ENCODE measurements at regions of chr10 and their contacts with region 1.

Region 1: DNA sequence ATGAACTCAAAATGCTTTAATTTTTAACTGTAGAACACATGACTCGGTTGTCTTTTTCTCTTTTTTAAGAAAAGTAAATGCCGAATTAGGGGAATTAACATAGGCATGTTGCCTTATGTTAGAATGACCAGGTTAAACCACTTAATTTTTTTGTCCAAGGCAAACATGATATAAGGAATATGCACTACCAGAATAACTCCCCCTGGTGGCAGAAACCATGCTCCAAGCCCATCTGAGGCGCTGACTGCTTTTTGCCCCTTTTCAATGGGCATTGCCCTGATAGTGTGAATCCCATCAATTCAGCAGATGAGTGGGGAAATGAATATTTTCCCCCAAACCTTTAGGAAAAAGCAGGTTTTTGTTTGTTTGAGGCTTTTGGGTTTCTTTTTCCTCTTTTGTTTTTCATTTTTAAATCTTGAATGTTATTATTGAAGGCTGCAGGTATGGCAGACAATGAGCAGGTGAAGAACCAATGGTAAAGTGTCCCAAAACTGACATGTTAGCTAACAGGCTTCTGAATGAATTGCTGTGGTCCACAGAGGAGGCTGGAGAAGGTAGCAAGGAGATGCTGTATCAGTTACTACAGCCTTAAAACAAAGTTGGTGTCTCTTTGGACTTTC is 284.3 kb downstream of the SORCS3 start:
- DNase-seq: peak; percentile 55
- H3K4me3 Mint-ChIP-seq: no peak overlapping the region
- H3K27ac Mint-ChIP-seq: no peak overlapping the region
- H3K4me1 Mint-ChIP-seq: no peaks in the 10 kb centered on the region
- H3K27me3 Mint-ChIP-seq: peaks cover 22% of the 10 kb centered on the region
- CTCF ChIP-seq: no peak

Region 2: GRCh38 chr10:104406715-104407650 is 518.4 kb before region 1 on chr10:
- CTCF ChIA-PET with region 1: no interaction called
- intact Hi-C with region 1: loop called (anchors 10 kb)
- DNase-seq: no peak
- H3K4me3 Mint-ChIP-seq: no peak overlapping the region
- H3K27ac Mint-ChIP-seq: no peak overlapping the region
- H3K4me1 Mint-ChIP-seq: no peaks in the 10 kb centered on the region
- H3K27me3 Mint-ChIP-seq: peaks cover 50% of the 10 kb centered on the region
- CTCF ChIP-seq: no peak

Region 3: GRCh38 chr10:104650072-104650471 is 275.3 kb before region 1 on chr10:
- CTCF ChIA-PET with region 1: no interaction called
- intact Hi-C with region 1: loop called (anchors 1 kb)
- DNase-seq: no peak
- H3K4me3 Mint-ChIP-seq: no peak overlapping the region
- H3K27ac Mint-ChIP-seq: no peak overlapping the region
- H3K4me1 Mint-ChIP-seq: no peaks in the 10 kb centered on the region
- H3K27me3 Mint-ChIP-seq: peaks cover 51% of the 10 kb centered on the region
- CTCF ChIP-seq: no peak

Region 4: DNA sequence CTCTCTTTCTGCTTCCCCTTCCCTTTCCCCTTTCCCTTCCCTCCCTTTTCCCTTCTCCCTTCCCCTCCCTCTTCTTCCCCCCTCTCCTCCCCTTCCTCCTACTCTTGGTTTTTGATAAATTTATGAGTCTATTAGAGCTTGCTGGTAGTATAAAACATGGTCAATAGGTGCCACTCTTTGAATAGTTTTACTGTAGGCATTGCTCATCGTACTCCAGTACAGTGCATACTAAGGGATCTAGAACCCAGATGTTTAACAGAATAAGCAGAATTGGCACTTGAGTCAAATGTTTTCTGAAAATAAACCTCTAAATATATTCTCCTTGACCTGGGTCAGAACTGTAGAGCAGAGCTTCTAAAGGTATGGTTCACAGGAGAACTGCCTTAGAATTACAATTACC is 157.6 kb before region 1 on chr10:
- CTCF ChIA-PET with region 1: interaction called, 5 read pairs
- intact Hi-C with region 1: loop called (anchors 1 kb)
- DNase-seq: no peak
- H3K4me3 Mint-ChIP-seq: no peak overlapping the region
- H3K27ac Mint-ChIP-seq: no peak overlapping the region
- H3K4me1 Mint-ChIP-seq: no peaks in the 10 kb centered on the region
- H3K27me3 Mint-ChIP-seq: peaks cover 55% of the 10 kb centered on the region
- CTCF ChIP-seq: no peak

Region 5: DNA sequence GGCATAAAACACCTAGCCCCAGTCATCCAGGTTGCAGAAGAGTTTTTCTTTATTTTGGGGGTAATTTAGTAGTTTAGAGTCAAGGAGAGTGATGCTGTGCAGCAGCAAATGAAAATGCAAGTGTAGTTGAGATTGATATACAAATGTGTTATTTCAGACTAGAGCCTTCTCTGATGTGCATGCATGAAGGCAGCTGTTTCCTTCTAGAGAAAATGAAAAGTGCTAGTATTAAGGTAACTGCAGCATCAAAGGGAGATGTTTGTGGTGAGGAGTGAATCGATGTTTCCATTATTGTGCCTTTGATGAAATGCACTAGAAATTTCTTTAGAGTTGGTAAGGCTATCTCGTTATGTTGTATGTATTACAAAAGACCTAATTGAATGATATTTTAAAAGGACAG is 55.0 kb after region 1 on chr10:
- CTCF ChIA-PET with region 1: no interaction called
- intact Hi-C with region 1: no loop called
- DNase-seq: no peak
- H3K4me3 Mint-ChIP-seq: no peak overlapping the region
- H3K27ac Mint-ChIP-seq: no peak overlapping the region
- H3K4me1 Mint-ChIP-seq: no peaks in the 10 kb centered on the region
- H3K27me3 Mint-ChIP-seq: no peaks in the 10 kb centered on the region
- CTCF ChIP-seq: no peak